Panc1 (cell line): ENCODE measurements at regions of chr2 and their contacts with region 1.

Region 1: DNA sequence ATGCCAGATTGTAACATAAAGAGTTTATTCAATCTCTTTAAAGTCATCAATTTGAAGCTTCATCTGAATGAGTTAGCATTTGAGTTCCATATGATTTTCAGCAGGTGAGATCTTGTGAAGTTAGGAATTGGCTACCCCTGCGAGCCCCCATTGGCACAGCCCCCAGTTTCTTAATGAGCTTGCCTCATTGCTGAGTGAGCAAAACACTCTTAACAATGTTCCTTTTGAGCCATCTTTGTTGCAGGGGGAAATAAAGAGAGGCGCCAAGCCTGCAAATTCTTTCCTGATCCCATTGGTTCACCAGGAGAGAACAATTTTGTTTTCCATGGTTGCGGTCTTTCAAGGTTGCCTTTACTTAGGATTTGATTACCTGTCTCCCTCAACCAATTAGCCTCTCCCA is 18.7 kb downstream of the DPP10 start:
- DNase-seq: no peak
- ATAC-seq: no peak
- H3K4me3 ChIP-seq: no peak overlapping the region
- H3K27ac ChIP-seq: no peak overlapping the region
- H3K4me1 ChIP-seq: no peaks in the 10 kb centered on the region
- H3K27me3 ChIP-seq: no peaks in the 10 kb centered on the region; the same call in 1 of the 2 replicates
- CTCF ChIP-seq: no peak

Region 2: GRCh38 chr2:114248648-114249047 is 212.5 kb before region 1 on chr2:
- CTCF ChIA-PET with region 1: no interaction called
- POLR2A ChIA-PET with region 1: no interaction called
- in situ Hi-C with region 1: no loop called
- intact Hi-C with region 1: no loop called
- DNase-seq: no peak
- ATAC-seq: no peak
- H3K4me3 ChIP-seq: no peak overlapping the region
- H3K27ac ChIP-seq: no peak overlapping the region
- H3K4me1 ChIP-seq: no peaks in the 10 kb centered on the region
- H3K27me3 ChIP-seq: no peaks in the 10 kb centered on the region
- CTCF ChIP-seq: no peak

Region 3: GRCh38 chr2:114450639-114451038 is 10.5 kb before region 1 on chr2:
- CTCF ChIA-PET with region 1: no interaction called
- POLR2A ChIA-PET with region 1: interaction called, 14 read pairs
- in situ Hi-C with region 1: no loop called
- intact Hi-C with region 1: no loop called
- DNase-seq: no peak
- ATAC-seq: no peak
- H3K4me3 ChIP-seq: no peak overlapping the region
- H3K27ac ChIP-seq: no peak overlapping the region
- H3K4me1 ChIP-seq: no peaks in the 10 kb centered on the region
- H3K27me3 ChIP-seq: no peaks in the 10 kb centered on the region
- CTCF ChIP-seq: no peak

Region 4: DNA sequence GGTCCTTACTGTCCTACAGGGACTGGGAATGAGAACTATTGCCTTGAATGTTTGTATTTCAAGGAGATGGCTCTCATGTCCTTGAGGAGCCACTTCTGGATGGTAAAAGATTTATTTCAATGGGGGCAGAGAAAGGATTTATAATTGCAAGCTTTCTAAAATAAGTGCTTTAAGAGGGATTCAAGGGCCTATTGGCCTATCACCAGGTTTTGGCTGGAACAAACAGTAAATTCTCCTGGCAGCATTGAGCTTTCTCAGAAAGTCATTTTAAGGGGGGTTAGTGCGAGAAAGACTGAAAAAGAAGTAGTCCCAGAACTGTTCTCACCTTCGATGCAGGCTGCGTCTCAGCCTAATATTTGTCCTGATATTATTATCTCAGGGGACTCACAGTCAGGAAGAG is 11.1 kb after region 1 on chr2:
- CTCF ChIA-PET with region 1: no interaction called
- POLR2A ChIA-PET with region 1: no interaction called
- in situ Hi-C with region 1: no loop called
- intact Hi-C with region 1: no loop called
- DNase-seq: no peak
- ATAC-seq: no peak
- H3K4me3 ChIP-seq: no peak overlapping the region
- H3K27ac ChIP-seq: no peak overlapping the region
- H3K4me1 ChIP-seq: no peaks in the 10 kb centered on the region
- H3K27me3 ChIP-seq: no peaks in the 10 kb centered on the region
- CTCF ChIP-seq: no peak

Region 5: DNA sequence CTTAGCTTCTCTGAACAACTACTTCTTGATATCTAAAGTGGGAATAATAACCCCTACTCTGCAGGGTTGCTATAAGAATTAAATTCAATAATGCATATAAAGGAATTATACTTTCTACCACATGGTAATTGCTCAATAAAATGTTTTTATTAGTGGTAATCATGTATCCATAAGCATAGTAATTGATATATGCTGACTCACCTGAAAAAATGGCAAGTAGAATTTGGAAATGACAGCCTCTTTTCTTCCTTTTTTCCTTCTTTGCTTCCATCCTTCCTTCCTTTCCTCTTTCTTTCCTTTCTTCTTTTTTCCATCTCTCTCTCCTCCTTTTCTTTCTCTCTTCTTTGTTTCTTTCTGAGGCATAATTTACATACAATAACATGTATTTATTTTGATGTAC is 46.6 kb after region 1 on chr2:
- CTCF ChIA-PET with region 1: no interaction called
- POLR2A ChIA-PET with region 1: no interaction called
- in situ Hi-C with region 1: no loop called
- intact Hi-C with region 1: no loop called
- DNase-seq: no peak
- ATAC-seq: no peak
- H3K4me3 ChIP-seq: no peak overlapping the region
- H3K27ac ChIP-seq: no peak overlapping the region
- H3K4me1 ChIP-seq: no peaks in the 10 kb centered on the region
- H3K27me3 ChIP-seq: 0 out of 2 replicates have a peak, but pooled peaks cover 2% of the 10 kb centered on the region
- CTCF ChIP-seq: no peak